Esophagus squamous epithelium (tissue), 5 donors: ENCODE measurements at regions of chr9 and their contacts with region 1.

Region 1: GRCh38 chr9:119556129-119556875 is 187.1 kb upstream of the BRINP1 start:
- DNase-seq: no peak
- H3K4me3 ChIP-seq: peak overlapping the region in 3 of 4 donors; percentile 5 to 57 (median 31)
- H3K27ac ChIP-seq: peak overlapping the region in 2 of 4 donors; percentile 10 to 49
- H3K4me1 ChIP-seq: peaks cover 0 to 14% (median 7%) of the 10 kb centered on the region in 3 donors
- H3K27me3 ChIP-seq: peaks cover 0 to 22% (median 0%) of the 10 kb centered on the region in 4 donors
- CTCF ChIP-seq: peak; percentile 54 to 91 (median 84)
- POLR2A ChIP-seq: no peak

Region 2: DNA sequence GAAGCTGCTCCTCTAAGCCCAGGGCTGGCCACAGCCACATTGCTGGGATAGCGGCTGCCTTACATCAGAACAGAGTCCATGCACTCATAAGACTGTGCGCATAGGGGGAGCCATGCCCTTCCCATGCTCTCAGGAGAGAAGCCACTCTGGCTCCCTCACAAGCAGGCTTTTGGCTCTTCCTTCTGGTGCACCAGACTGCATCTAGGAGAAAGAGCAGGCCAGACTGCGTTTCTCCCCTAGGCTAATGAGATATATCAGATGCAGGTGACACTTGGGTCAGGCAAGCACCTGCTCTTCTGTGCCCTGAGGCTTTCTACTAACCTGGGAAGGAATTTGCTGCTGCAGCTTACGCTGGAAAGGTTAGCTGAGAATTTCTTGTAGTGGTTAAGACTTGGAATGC is 143.9 kb before region 1 on chr9:
- intact Hi-C with region 1: no loop called
- DNase-seq: no peak
- H3K4me3 ChIP-seq: no peak overlapping the region
- H3K27ac ChIP-seq: no peak overlapping the region
- H3K4me1 ChIP-seq: no peaks in the 10 kb centered on the region
- H3K27me3 ChIP-seq: no peaks in the 10 kb centered on the region
- CTCF ChIP-seq: no peak
- POLR2A ChIP-seq: no peak

Region 3: DNA sequence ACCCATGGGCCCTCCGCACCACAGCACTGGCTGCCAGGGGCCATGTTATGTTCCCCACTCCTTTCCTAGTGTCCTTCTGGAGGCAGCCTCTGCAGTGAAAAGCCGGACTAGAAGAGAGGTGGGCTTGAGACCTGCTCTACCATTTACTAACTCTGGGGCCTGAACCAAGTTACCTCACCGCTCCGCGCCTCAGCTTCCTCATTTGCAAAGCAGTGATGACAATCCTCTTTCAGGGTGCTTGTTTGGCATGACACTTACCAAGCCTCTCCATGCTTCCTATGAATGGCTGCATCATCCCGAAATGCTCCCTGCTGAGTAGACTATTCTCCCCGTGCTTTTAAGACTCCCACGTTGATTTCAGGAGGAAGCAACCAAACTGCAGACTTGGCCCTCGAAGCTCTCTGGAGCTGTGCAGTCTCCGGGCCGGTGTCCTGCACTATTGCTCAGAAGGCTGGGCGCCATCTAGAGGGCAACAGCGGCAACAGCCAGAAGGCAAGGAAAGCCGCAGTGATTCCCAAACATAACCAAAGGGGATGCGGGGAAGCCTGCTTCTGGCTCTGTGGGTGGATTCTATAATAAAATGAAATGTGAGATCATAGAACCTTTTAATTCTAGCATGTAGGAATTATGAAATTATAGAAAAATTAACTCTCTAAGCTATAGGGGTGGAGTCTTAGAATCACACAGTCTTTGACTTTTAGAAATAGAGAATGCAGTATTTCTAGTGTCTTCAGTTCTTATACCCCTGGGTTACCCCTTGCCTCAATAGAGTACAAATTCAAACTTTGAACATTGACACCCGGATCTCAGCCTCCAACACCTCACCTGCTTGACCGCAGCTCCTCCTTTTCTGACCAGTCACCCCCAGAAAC is 412.8 kb after region 1 on chr9:
- intact Hi-C with region 1: loop called (anchors 10 kb)
- DNase-seq: no peak
- H3K4me3 ChIP-seq: no peak overlapping the region
- H3K27ac ChIP-seq: no peak overlapping the region
- H3K4me1 ChIP-seq: peaks cover 0 to 5% (median 0%) of the 10 kb centered on the region in 3 donors
- H3K27me3 ChIP-seq: peaks cover 0 to 8% (median 0%) of the 10 kb centered on the region in 4 donors
- CTCF ChIP-seq: peak; percentile 61 to 83 (median 74)
- POLR2A ChIP-seq: no peak